ENCODE measurements at regions of chr15 and their contacts with region 1.

Region 1: DNA sequence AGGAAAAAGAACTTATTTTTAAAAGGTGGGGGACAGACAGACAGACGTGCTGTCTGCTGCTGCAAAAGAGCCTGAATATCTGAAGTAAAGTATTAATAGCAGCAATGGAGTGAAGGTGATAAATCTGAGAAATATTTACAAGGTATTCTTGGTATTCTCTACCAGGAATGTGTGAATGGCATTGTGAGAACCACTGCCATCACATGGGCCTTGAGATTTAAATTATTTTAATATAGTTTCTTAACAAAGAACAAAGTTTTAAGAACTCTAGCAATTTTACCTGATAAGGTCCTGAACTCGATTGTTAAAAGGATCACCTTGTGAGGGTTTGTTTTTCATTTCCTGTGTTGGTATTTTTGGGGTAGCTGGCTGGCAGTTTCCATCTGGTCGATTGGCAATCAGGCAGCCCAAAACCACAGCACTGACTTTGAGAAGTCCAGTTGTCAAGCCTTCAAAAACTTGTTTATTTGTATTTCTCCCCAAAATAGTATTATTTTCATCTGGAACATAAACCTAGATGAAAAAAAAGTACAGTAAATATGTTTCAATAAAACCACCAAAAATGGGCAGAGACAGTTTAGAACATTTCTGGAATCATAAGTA is 97.3 kb downstream of the ISL2 start:
- DNase-seq: no peak
- H3K4me3 ChIP-seq: no peak overlapping the region
- H3K27ac ChIP-seq: peak overlapping the region; percentile 17
- H3K4me1 ChIP-seq: peaks cover 10% of the 10 kb centered on the region; the same call in 1 of the 2 replicates
- H3K27me3 ChIP-seq: no peaks in the 10 kb centered on the region
- CTCF ChIP-seq: no peak

Region 2: DNA sequence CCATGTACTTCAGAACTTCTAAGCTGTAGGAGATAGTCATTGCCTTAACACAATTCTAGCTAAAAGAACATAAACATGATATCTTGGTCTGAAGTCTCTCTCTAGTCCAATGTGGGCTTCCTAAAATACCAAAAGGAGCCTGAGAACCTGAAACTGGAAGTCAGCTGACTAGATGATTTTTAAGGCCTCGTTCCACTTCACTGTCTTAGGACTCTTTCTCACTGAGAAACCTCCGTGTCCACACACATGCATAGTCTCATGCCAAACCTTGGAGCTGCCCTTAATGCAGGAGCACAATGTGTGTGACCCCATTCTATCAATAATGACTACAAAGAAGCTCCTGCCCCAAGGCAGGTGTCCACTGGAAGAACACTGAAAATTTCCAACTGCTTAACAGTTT is 210.4 kb before region 1 on chr15:
- CTCF ChIA-PET with region 1: interaction called, 11 read pairs
- POLR2A ChIA-PET with region 1: no interaction called
- intact Hi-C with region 1: no loop called
- DNase-seq: no peak
- H3K4me3 ChIP-seq: no peak overlapping the region
- H3K27ac ChIP-seq: no peak overlapping the region
- H3K4me1 ChIP-seq: peaks cover 16% of the 10 kb centered on the region
- H3K27me3 ChIP-seq: no peaks in the 10 kb centered on the region
- CTCF ChIP-seq: no peak

Region 3: GRCh38 chr15:76368122-76368589 is 65.7 kb before region 1 on chr15:
- CTCF ChIA-PET with region 1: no interaction called
- POLR2A ChIA-PET with region 1: no interaction called
- intact Hi-C with region 1: no loop called
- DNase-seq: no peak
- H3K4me3 ChIP-seq: no peak overlapping the region
- H3K27ac ChIP-seq: no peak overlapping the region
- H3K4me1 ChIP-seq: peaks cover 4% of the 10 kb centered on the region; the same call in 1 of the 2 replicates
- H3K27me3 ChIP-seq: no peaks in the 10 kb centered on the region
- CTCF ChIP-seq: no peak

Measured in PC-9 (cell line).